PC-3 (cell line): ENCODE measurements at regions of chr7 and their contacts with region 1.

Region 1: GRCh38 chr7:1503816-1504775 is at the start of gene INTS1:
- DNase-seq: peak; percentile 95
- ATAC-seq: peak; percentile 93
- H3K4me3 ChIP-seq: peak within 1 kb of the TSS; percentile 97
- H3K27ac ChIP-seq: peak within 1 kb of the TSS; percentile 20; the same call in 1 of the 2 replicates
- H3K4me1 ChIP-seq: peaks cover 16% of the 10 kb centered on the region
- H3K27me3 ChIP-seq: no peaks in the 10 kb centered on the region
- CTCF ChIP-seq: peak; percentile 78
- total RNA-seq, gene INTS1: 62.9 and 92.6 TPM in 2 replicates

Region 2: GRCh38 chr7:767941-768731 is 736.0 kb before region 1 on chr7:
- CTCF ChIA-PET with region 1: no interaction called
- POLR2A ChIA-PET with region 1: no interaction called
- intact Hi-C with region 1: no loop called
- DNase-seq: no peak
- ATAC-seq: no peak
- H3K4me3 ChIP-seq: no peak overlapping the region
- H3K27ac ChIP-seq: no peak overlapping the region
- H3K4me1 ChIP-seq: no peaks in the 10 kb centered on the region
- H3K27me3 ChIP-seq: no peaks in the 10 kb centered on the region
- CTCF ChIP-seq: no peak

Region 3: DNA sequence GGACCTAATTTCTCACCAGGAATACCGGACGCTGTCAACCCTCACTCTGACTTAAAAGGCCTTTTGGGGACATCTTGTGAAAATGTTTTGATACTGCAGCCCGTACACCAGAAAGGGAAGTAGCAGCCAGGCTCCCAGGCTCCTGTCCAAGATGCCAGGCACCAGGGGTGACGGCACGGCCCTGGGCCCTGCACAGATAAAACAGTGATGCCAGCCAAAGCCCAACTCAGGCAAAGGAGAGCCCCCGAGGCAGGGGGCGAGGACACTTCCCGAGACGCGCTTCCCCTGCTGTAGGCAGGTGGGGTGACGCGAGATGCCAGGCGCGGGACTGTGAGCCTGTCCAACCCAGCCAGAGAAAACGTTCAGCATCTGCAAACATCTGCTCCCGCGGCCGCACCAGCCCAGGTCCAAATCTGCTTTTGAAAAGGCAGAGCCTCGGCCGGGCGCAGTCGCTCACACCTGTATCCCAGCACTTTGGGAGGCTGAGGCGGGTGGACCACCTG is 359.8 kb before region 1 on chr7:
- CTCF ChIA-PET with region 1: no interaction called
- POLR2A ChIA-PET with region 1: no interaction called
- intact Hi-C with region 1: no loop called
- DNase-seq: peak; percentile 54
- ATAC-seq: peak; percentile 96
- H3K4me3 ChIP-seq: no peak overlapping the region
- H3K27ac ChIP-seq: no peak overlapping the region
- H3K4me1 ChIP-seq: no peaks in the 10 kb centered on the region
- H3K27me3 ChIP-seq: no peaks in the 10 kb centered on the region
- CTCF ChIP-seq: peak; percentile 48

Region 4: DNA sequence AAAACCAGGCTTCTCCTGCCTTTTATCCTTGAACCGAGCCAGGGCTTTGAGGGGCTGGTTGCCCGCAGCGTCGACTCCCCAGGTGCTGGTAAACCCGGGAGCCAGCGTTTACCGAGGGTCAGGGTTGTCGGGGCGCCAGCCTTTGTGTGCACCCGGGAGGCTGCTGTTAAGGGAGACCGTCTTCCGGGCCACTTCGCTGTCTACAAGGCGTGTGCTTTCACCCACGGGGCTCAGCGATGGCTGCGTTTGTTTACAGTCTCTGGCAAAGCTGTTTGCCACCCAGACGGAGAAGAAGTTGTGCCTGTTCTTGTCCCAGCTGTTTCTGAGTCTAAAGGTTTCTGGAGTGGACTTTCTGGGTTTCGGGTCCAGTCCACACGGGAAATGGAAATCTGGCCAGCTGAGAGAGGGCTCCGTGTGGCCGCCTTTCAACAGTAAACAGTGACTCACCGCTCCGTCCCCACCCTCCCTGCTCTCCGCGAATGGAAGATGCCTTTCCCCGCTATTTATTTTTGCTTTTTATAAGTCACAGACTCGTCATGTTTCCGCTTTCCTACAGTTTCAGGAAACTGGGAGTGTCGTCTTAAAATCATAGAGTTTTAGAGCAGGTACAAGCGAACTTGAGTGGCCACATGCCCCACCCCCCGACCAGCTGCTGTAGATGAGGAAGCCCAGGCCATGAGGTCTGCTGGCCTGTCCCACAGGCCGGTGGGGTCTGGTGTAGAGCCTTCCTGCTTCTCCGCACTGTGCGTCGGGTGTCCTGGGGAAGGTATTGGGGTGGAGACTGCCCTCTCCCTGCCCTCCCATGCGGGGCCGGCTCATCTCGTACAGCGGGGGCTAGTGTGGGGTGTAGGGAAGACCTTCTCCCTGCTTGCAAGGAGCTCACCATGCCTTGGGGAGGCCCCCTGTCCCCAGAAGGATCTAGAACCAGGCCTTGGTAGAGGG is 28.7 kb after region 1 on chr7:
- CTCF ChIA-PET with region 1: interaction called, 4 read pairs
- POLR2A ChIA-PET with region 1: no interaction called
- intact Hi-C with region 1: loop called (anchors 2 kb)
- DNase-seq: peak; percentile 97
- ATAC-seq: peak; percentile 52
- H3K4me3 ChIP-seq: peak overlapping the region; percentile 88
- H3K27ac ChIP-seq: peak overlapping the region; percentile 97
- H3K4me1 ChIP-seq: peaks cover 32% of the 10 kb centered on the region
- H3K27me3 ChIP-seq: no peaks in the 10 kb centered on the region
- CTCF ChIP-seq: no peak